Posterior vena cava (tissue), 2 donors: ENCODE measurements at regions of chr2 and their contacts with region 1.

Region 1: GRCh38 chr2:130231656-130232055 is 33.4 kb upstream of the TUBA3E start:
- DNase-seq: no peak

Region 2: DNA sequence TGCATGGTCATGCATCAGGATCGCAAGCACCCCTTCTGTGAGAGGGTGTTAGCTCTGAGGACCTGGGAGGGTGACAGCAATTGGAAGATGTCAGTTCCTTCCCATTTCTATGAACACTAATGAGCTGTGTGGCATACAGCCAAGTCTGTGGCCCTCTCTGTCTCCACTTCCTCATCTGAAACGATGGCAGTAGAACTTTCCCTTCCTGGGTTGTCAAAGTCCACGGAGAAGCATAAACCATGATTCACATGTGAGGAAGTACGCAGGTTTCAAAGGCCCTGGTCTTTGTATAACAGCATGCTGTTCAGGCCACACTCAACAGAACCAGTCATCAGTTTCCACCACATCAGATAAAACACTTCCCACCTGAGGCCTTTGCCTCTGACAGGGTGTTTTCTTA is 419.6 kb before region 1 on chr2:
- intact Hi-C with region 1: loop called in 1 of 2 experiments (anchors 10 kb)
- DNase-seq: no peak